H1 (cell line): ENCODE measurements at regions of chr2 and their contacts with region 1.

Region 1: DNA sequence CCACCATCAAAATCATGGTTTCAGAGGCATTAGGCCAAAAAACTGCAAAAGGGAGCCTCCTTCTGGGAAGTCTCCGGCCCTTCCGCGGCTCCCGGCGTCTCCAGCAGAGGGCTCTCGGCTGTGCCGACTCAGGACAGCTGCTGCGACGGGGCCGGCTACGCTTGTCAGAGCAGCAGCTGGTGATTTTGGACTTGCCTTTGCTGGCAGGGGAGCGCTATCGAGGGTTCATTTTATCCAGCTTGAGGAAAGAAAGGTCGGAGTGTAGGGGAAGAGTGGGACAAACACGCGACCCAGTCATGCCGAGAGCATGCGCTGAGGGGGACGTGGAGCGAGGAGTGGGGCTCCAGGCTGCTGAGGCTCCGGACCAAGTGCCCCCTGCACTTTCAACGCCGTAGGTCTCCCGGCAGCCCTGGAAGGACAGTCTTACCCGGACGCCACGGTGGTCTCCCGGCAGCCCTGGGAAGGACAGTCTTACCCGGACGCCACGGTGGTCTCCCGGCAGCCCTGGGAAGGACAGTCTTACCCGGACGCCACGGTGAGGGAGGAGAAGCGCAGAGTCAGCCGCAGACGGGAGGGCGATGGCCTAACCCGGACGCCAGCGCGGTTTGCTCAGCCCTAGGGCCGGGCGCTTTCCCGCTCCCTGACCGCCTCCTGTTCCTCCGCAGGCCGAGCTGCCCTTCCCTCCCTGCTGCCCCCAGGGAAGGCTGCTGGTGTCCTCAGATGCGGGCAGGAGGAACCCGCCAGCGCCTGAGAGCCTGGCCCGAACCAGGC is 21.7 kb downstream of the DDX18 start:
- DNase-seq: peak in 1 of 2 experiments; percentile 89
- H3K4me3 ChIP-seq: peak overlapping the region; percentile 37 to 52 (median 42)
- H3K27ac ChIP-seq: no peak overlapping the region
- H3K4me1 ChIP-seq: peaks cover 0 to 2% (median under 1%) of the 10 kb centered on the region in 4 experiments; a peak in 3 of 7 replicates
- H3K27me3 ChIP-seq: peaks cover 0 to 4% (median 0%) of the 10 kb centered on the region in 4 experiments; a peak in 2 of 7 replicates
- CTCF ChIP-seq: peak; percentile 83 to 97 (median 89)
- EP300 ChIP-seq: no peak
- POLR2A ChIP-seq: no peak
- RAD21 ChIP-seq: peak; percentile 72 to 85

Region 2: DNA sequence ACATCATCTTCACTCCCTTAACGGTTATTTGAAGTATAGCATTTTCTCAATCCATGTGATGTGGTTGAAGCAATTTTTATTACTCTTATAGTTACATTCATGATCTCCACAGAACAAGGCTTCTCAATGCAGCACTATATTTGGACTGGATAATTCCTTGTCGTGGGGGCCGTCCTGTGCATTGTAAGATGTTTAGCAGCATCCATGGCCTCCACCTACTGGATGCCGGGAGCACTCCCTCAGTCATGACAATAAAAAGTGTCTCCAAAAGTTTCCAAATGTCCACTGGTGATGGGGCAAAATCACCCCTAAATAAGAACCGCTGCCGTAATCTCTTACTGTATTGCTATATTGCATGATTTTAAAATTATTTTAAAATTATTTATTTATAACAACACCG is 132.3 kb before region 1 on chr2:
- CTCF ChIA-PET with region 1: no interaction called
- POLR2A ChIA-PET with region 1: no interaction called
- DNase-seq: no peak
- H3K4me3 ChIP-seq: no peak overlapping the region
- H3K27ac ChIP-seq: no peak overlapping the region
- H3K4me1 ChIP-seq: no peaks in the 10 kb centered on the region
- H3K27me3 ChIP-seq: no peaks in the 10 kb centered on the region
- CTCF ChIP-seq: peak in 2 of 3 experiments; percentile 24 to 33; a peak in 3 of 4 replicates
- EP300 ChIP-seq: no peak
- POLR2A ChIP-seq: no peak
- RAD21 ChIP-seq: peak; percentile 40 to 53; a peak in 3 of 4 replicates

Region 3: DNA sequence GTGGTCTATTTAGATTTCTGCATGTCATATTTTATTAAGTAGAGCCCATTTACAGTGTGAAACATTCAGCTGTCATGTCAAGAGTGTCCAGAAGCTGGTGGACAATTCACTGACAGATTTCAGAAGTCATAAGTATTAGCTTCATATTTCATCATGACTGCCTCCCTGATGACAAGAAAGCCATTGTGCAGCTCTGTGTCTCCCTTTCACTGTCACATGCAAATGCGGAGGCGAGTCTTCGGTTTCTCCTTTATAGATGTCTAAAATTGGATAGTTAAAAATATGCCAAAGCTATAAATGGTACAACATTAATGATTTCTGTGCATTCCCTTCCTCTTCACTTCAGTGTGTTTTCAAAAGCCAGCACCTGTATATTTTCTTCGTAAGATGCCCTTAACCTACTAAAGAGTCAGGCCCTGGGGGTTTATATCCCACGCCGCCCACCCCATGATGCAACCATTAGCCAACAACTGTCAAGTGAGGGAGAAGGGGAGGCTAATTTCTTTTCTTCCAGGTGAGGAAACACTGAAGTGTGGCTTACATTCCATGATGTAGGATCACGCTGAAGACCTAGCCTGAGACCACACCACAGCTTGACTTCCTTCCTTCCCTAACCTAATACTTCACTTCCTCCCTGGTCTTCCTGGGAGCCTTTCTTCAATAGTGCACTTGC is 121.3 kb before region 1 on chr2:
- CTCF ChIA-PET with region 1: no interaction called
- POLR2A ChIA-PET with region 1: no interaction called
- DNase-seq: no peak
- H3K4me3 ChIP-seq: no peak overlapping the region
- H3K27ac ChIP-seq: no peak overlapping the region
- H3K4me1 ChIP-seq: no peaks in the 10 kb centered on the region
- H3K27me3 ChIP-seq: no peaks in the 10 kb centered on the region
- CTCF ChIP-seq: no peak
- EP300 ChIP-seq: no peak
- POLR2A ChIP-seq: no peak
- RAD21 ChIP-seq: no peak

Region 4: DNA sequence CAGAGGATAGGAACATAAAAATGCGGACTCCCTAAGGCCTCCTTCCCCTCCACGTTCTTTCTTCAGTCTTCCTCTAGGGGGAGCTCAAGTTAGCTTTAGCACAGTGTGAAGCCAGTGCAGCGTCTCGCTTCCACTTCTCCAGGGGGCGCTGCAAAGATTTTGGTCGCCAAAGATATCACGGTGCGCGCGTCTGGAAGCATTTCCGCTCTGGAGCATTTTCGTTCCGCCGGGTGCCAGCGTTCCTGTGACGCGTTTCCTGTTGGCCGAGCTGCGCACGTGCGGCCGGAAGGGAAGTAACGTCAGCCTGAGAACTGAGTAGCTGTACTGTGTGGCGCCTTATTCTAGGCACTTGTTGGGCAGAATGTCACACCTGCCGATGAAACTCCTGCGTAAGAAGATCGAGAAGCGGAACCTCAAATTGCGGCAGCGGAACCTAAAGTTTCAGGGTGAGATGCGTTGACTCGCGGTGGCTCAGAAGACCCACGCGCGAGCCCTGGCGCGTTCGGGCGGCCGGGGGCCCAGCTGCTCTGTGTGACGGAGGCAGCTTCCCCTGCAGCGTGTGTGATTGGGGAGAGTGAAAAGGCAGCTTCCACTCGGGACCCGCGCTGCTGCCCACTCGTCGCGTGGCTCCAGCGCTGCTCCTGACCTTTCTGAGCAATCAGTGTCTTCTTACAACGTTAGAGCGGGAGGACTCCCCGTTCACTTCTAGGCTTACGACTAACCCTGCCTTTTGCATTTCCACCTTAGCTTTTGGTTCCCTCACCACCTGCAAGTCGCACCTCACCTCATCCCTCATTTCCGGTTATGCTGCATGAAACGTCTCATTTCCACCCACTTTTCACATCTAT is 21.5 kb before region 1 on chr2 and contains the start of gene DDX18:
- CTCF ChIA-PET with region 1: interaction called, 16 read pairs
- POLR2A ChIA-PET with region 1: interaction called, 5 read pairs
- DNase-seq: peak; percentile 89 to 94
- H3K4me3 ChIP-seq: peak within 1 kb of the TSS; percentile 85 to 99 (median 94)
- H3K27ac ChIP-seq: peak within 1 kb of the TSS; percentile 72
- H3K4me1 ChIP-seq: peaks cover 0 to 8% (median 5%) of the 10 kb centered on the region in 4 experiments; a peak in 3 of 7 replicates
- H3K27me3 ChIP-seq: no peaks in the 10 kb centered on the region
- CTCF ChIP-seq: peak; percentile 82 to 100 (median 100)
- EP300 ChIP-seq: peak in 1 of 2 experiments; percentile 81; a peak in 1 of 3 replicates
- POLR2A ChIP-seq: peak; percentile 33 to 80
- RAD21 ChIP-seq: peak; percentile 53 to 66; a peak in 3 of 4 replicates
- total RNA-seq, gene DDX18: 111 and 119 TPM in 2 replicates

Region 5: DNA sequence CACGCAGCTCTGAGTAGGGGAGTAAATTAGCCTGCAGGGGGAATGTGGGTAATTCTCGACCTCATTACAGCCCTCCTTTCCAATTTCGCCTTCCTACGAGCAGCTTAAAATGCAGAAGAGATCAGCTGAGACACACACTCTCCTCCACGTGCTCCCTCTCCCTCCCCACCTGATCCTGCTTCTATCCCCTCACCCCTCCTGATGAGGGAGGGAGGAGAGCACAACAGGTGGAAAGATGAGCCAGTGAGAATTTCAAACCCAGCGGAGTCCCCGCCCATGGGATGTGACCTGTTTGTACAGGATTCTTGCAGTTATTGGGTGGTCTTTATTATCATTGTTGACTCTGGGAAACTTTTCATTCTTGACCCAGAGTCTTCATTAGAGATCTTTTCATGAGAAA is 13.8 kb after region 1 on chr2:
- CTCF ChIA-PET with region 1: interaction called, 14 read pairs
- POLR2A ChIA-PET with region 1: interaction called, 24 read pairs
- DNase-seq: peak in 1 of 2 experiments; percentile 56
- H3K4me3 ChIP-seq: peak overlapping the region in 1 of 4 experiments; percentile 46; a peak in 2 of 8 replicates
- H3K27ac ChIP-seq: no peak overlapping the region
- H3K4me1 ChIP-seq: peaks cover 0 to 11% (median 4%) of the 10 kb centered on the region in 4 experiments; a peak in 6 of 7 replicates
- H3K27me3 ChIP-seq: no peaks in the 10 kb centered on the region
- CTCF ChIP-seq: no peak
- EP300 ChIP-seq: no peak
- POLR2A ChIP-seq: peak in 1 of 2 experiments; percentile 81; a peak in 2 of 3 replicates
- RAD21 ChIP-seq: no peak

Region 6: DNA sequence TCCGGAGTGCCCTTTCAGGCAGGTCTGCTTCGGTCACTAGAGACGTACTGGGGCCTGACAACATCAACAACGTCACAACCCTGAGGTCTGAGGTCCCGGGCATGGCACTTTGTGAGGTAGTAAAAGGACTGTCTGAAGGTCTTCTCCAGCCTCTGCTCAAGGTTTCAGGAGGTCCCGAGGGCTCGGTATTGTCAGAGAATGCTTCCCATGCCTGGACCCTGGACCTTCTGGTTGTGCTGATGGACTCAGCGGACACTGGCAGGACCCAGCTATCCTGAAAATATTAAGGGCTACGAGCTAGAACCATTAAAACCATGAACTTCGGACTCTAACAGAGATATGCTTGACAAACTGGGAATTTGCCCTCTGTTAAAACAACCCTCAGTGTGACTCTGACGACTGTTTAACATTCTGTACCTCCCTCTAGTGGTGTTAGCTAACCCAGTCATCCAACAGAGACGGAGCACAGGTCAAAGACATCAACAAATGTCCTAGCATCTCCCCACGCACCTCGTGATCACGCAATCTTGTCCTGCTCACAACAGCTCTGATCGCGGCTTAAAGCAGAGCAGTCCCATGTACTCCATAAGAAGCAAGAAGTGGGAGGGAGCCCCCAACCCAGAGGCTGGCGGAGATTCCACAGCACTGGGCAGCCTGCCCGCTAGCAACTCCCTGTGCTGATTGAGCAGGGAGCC is 81.2 kb after region 1 on chr2:
- CTCF ChIA-PET with region 1: interaction called, 27 read pairs
- POLR2A ChIA-PET with region 1: interaction called, 4 read pairs
- DNase-seq: no peak
- H3K4me3 ChIP-seq: no peak overlapping the region
- H3K27ac ChIP-seq: no peak overlapping the region
- H3K4me1 ChIP-seq: no peaks in the 10 kb centered on the region
- H3K27me3 ChIP-seq: no peaks in the 10 kb centered on the region
- CTCF ChIP-seq: peak in 2 of 3 experiments; percentile 65 to 74; a peak in 3 of 4 replicates
- EP300 ChIP-seq: no peak
- POLR2A ChIP-seq: no peak
- RAD21 ChIP-seq: peak; percentile 66 to 80

Region 7: GRCh38 chr2:117996525-117996924 is 160.3 kb after region 1 on chr2:
- CTCF ChIA-PET with region 1: interaction called, 19 read pairs
- POLR2A ChIA-PET with region 1: no interaction called
- DNase-seq: no peak
- H3K4me3 ChIP-seq: no peak overlapping the region
- H3K27ac ChIP-seq: no peak overlapping the region
- H3K4me1 ChIP-seq: no peaks in the 10 kb centered on the region
- H3K27me3 ChIP-seq: no peaks in the 10 kb centered on the region
- CTCF ChIP-seq: no peak
- EP300 ChIP-seq: no peak
- POLR2A ChIP-seq: no peak
- RAD21 ChIP-seq: no peak